ENCODE measurements at regions of chr2 and their contacts with region 1.

Region 1: DNA sequence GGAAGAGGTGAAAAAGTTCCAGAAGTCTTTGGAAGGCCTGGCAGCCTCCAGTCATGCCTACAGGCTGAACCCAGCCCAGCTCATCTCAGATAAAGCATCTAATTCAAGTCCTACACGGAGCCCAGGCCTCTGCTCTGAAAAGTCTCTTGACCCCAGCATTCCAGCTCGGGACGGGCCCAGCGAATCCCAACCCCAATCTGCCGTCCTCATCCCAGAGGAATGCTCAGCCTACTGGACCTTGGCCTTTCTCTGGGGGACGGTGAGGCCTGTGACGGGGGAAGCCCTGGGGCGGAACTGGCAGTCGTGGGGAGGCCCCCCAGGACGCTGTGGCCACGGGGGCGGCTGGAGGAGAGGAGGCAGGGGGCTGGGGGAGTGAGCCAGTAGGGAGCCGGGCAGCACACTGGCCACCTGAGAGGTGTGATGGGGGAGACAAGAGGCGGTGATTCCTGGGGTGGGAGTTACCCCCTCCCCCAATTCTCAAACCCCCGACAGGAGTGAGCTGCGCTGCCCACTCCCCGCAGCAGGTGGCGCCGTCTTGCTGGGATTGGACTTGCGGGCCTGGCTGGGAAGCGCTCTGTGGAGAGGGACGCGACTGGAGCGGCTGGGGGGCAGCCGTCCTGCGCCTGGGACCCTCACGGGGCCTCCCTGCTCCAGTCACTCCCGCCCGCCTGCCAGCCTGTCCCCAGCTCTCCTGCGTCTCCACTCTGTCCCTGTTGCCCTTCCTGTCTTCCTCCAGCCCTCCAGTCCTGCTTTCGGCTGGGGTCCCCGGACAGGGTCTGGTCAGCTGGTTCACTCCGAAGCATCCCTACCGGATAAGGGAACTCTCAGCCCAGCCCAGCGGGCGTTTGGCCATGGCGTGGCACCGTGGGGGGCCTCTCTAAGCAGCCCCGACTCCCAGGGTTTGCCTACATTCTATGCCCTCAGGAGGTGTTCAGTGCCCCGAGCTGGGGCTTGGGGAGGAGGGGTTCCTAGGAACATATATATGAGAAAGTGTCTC is 182.6 kb upstream of the HAAO start:
- DNase-seq: peak; percentile 97
- ATAC-seq: peak; percentile 60
- H3K4me3 ChIP-seq: peak overlapping the region; percentile 8 to 67 (median 42); a peak in 4 of 6 replicates
- H3K27ac ChIP-seq: peak overlapping the region; percentile 93
- H3K4me1 ChIP-seq: peaks cover 99% of the 10 kb centered on the region
- H3K27me3 ChIP-seq: no peaks in the 10 kb centered on the region
- CTCF ChIP-seq: peak; percentile 99
- EP300 ChIP-seq: peak; percentile 63 to 93; a peak in 3 of 4 replicates
- POLR2A ChIP-seq: peak in 1 of 2 experiments; percentile 63; a peak in 2 of 4 replicates
- RAD21 ChIP-seq: peak; percentile 100

Region 2: GRCh38 chr2:42944779-42945415 is 30.1 kb before region 1 on chr2:
- CTCF ChIA-PET with region 1: interaction called, 5 read pairs
- POLR2A ChIA-PET with region 1: interaction called, 40 read pairs
- in situ Hi-C with region 1: no loop called
- intact Hi-C with region 1: loop called (anchors 1 kb)
- DNase-seq: peak; percentile 59
- ATAC-seq: 0 out of 3 replicates have a peak, but pooled peaks have one; percentile 4
- H3K4me3 ChIP-seq: no peak overlapping the region
- H3K27ac ChIP-seq: no peak overlapping the region
- H3K4me1 ChIP-seq: peaks cover 95% of the 10 kb centered on the region
- H3K27me3 ChIP-seq: no peaks in the 10 kb centered on the region
- CTCF ChIP-seq: no peak
- EP300 ChIP-seq: no peak
- POLR2A ChIP-seq: no peak
- RAD21 ChIP-seq: no peak

Region 3: GRCh38 chr2:42987112-42987922 is 12.3 kb after region 1 on chr2:
- CTCF ChIA-PET with region 1: interaction called, 3 read pairs
- POLR2A ChIA-PET with region 1: interaction called, 82 read pairs
- in situ Hi-C with region 1: no loop called
- intact Hi-C with region 1: loop called (anchors 1 kb)
- DNase-seq: peak; percentile 91
- ATAC-seq: peak; percentile 74
- H3K4me3 ChIP-seq: no peak overlapping the region
- H3K27ac ChIP-seq: peak overlapping the region; percentile 73
- H3K4me1 ChIP-seq: peaks cover 81% of the 10 kb centered on the region
- H3K27me3 ChIP-seq: no peaks in the 10 kb centered on the region
- CTCF ChIP-seq: no peak
- EP300 ChIP-seq: peak in 1 of 2 experiments; percentile 77; a peak in 2 of 4 replicates
- POLR2A ChIP-seq: no peak
- RAD21 ChIP-seq: no peak

Region 4: GRCh38 chr2:43086451-43087221 is 111.6 kb after region 1 on chr2:
- CTCF ChIA-PET with region 1: no interaction called
- POLR2A ChIA-PET with region 1: interaction called, 16 read pairs
- in situ Hi-C with region 1: no loop called
- intact Hi-C with region 1: loop called (anchors 5 kb)
- DNase-seq: peak; percentile 50
- ATAC-seq: no peak
- H3K4me3 ChIP-seq: no peak overlapping the region
- H3K27ac ChIP-seq: no peak overlapping the region
- H3K4me1 ChIP-seq: peaks cover 74% of the 10 kb centered on the region
- H3K27me3 ChIP-seq: no peaks in the 10 kb centered on the region
- CTCF ChIP-seq: no peak
- EP300 ChIP-seq: no peak
- POLR2A ChIP-seq: no peak
- RAD21 ChIP-seq: no peak

Region 5: GRCh38 chr2:43142921-43143438 is 168.0 kb after region 1 on chr2:
- CTCF ChIA-PET with region 1: no interaction called
- POLR2A ChIA-PET with region 1: interaction called, 10 read pairs
- in situ Hi-C with region 1: no loop called
- intact Hi-C with region 1: no loop called
- DNase-seq: peak; percentile 78
- ATAC-seq: peak; percentile 86
- H3K4me3 ChIP-seq: no peak overlapping the region
- H3K27ac ChIP-seq: peak overlapping the region; percentile 0
- H3K4me1 ChIP-seq: peaks cover 62% of the 10 kb centered on the region
- H3K27me3 ChIP-seq: no peaks in the 10 kb centered on the region
- CTCF ChIP-seq: peak; percentile 70
- EP300 ChIP-seq: no peak
- POLR2A ChIP-seq: no peak
- RAD21 ChIP-seq: peak; percentile 75

Region 6: DNA sequence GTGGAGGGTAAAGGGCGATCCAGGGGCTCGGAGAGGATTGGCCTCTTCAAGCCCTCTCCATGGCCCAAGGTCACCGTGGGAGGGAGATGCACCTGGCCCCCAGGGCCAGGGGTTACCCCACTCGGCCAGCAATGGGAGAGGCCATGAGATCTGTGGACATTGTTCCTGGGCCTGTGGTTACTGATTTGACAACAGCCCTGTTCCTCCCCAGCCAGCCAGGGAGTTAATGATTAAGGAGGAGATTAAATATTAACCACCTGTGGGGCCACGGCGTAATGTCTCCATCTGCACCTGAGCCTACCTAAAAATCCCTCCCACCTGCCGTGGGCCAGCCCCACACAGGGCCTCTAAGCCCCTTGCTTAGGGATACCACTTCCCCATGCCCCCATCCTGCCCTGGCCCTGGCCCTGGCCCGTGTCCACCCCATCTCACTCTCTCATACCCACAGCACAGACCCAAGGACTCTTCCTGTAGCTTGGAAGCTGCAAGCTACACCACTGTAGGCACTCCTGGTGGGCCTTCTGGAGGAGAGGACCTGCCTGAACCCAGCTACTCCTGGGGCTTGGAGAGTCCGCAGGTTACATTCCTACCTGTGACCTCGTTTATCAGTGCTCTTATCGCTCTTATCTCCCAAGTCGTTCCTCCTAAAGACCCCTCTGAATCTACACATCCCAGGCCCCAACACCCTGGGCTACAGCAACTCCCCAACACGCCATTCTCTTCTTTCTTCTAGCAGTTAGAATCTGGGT is 219.3 kb after region 1 on chr2:
- CTCF ChIA-PET with region 1: no interaction called
- POLR2A ChIA-PET with region 1: interaction called, 21 read pairs
- in situ Hi-C with region 1: no loop called
- intact Hi-C with region 1: loop called (anchors 1 kb)
- DNase-seq: peak; percentile 98
- ATAC-seq: peak; percentile 87
- H3K4me3 ChIP-seq: peak overlapping the region; percentile 49 to 76 (median 64)
- H3K27ac ChIP-seq: peak overlapping the region; percentile 95
- H3K4me1 ChIP-seq: peaks cover 96% of the 10 kb centered on the region
- H3K27me3 ChIP-seq: no peaks in the 10 kb centered on the region
- CTCF ChIP-seq: peak; percentile 14; the same call in 1 of the 2 replicates
- EP300 ChIP-seq: peak; percentile 70 to 94; a peak in 3 of 4 replicates
- POLR2A ChIP-seq: peak in 1 of 2 experiments; percentile 79; a peak in 2 of 4 replicates
- RAD21 ChIP-seq: no peak; the same call in 1 of the 2 replicates